ENCODE measurements at regions of chr10 and their contacts with region 1.

Region 1: DNA sequence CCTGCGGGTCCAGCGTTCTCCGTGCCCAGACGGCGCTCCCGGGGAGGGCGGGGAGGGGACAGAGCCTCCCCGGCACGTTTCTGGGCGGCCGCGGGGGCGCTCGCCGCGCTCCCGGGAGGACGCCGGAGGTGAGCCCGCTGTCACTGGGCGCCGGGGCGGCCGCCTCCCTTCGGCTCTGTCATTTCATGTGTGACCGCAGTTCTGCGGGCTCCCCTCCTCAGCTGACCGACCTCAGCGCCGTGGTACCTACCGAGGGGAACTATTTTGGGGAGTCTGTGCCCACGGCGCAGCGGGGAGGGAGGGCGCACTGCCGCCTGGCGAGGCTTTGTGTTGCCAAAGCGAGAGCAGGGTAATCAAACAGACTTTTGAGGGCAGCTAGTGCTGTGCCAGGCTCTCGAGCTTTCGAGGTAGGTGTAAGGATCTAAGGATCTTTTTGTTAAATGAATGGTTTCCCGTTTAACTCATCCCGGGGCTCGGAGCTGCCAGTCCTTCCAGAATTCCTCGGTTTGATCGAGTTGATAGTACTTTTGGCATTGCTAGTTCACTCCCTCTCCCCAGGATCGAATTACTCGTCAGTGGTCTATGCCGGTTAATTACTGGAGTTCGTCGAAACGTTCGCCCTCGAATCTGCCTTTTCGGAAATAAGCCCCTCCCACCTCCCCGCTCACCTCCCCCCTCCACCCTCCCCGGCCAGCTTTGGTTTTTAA is 1.9 kb downstream of the ARID5B start:
- H3K4me3 Mint-ChIP-seq: peak overlapping the region; percentile 97
- H3K27ac Mint-ChIP-seq: peak overlapping the region; percentile 97
- H3K4me1 Mint-ChIP-seq: peaks cover 29% of the 10 kb centered on the region
- H3K27me3 Mint-ChIP-seq: no peaks in the 10 kb centered on the region

Region 2: DNA sequence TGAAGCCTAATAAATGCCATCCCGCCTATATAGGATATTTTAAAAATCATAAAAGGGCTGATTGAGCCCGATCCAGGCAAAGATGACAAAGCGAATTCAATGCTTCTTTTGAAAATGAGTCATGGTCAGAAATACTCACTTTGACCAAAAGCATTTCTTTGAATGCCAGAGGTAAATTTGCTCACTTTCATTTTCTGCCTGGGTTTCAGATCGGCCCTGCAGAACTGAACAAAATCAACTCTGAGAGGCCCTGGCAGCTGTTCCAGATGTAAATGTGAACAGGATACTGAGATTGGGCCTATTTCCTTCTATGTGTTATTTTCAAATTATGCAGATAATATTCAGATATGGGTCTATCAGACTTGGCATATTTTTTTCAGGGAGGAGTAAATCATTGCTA is 116.6 kb before region 1 on chr10:
- intact Hi-C with region 1: no loop called
- H3K4me3 Mint-ChIP-seq: no peak overlapping the region
- H3K27ac Mint-ChIP-seq: no peak overlapping the region
- H3K4me1 Mint-ChIP-seq: peaks cover 6% of the 10 kb centered on the region
- H3K27me3 Mint-ChIP-seq: no peaks in the 10 kb centered on the region

Region 3: GRCh38 chr10:61941202-61941681 is 37.9 kb after region 1 on chr10:
- intact Hi-C with region 1: loop called (anchors 1 kb)
- H3K4me3 Mint-ChIP-seq: peak overlapping the region; percentile 64
- H3K27ac Mint-ChIP-seq: peak overlapping the region; percentile 94
- H3K4me1 Mint-ChIP-seq: peaks cover 59% of the 10 kb centered on the region
- H3K27me3 Mint-ChIP-seq: no peaks in the 10 kb centered on the region

Region 4: DNA sequence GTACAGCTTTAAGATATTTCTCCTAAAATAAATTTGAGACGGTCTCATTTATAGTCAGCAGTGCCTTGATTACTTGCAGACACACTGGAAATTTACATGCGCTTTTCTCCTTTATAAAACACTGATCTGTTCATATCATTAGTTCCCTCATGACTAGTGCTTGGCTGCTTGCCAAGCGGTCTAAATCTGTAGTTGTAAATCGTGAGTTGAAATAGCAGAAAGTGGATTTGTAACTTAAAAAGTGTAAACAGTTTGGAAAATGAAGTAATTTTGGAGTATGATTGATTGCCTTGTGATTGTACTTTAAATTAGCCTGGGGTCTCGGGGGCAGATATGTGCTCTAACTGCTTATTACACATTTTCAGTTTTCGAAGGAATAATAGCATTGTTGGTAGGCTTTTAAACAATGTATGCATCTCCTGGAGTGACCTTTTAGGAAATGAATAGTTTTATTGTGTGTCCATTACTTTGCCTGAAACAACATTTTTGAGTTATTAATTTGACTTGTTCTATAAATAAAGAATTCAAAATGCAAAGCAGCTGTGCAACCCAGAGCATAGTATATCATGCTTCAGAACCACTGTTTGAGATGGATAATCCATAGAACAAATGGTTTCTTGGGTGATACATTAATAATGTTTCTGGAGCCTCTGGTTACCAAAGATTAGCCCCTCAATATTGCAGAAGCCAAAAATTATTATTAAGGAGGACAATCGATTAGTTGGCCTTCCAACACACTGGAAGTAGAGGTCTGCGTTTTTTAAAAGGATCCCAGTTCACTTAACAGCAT is 71.4 kb after region 1 on chr10:
- intact Hi-C with region 1: loop called (anchors 5 kb)
- H3K4me3 Mint-ChIP-seq: no peak overlapping the region
- H3K27ac Mint-ChIP-seq: peak overlapping the region; percentile 22
- H3K4me1 Mint-ChIP-seq: peaks cover 42% of the 10 kb centered on the region
- H3K27me3 Mint-ChIP-seq: no peaks in the 10 kb centered on the region

Region 5: GRCh38 chr10:61992671-61993668 is 89.6 kb after region 1 on chr10:
- intact Hi-C with region 1: loop called (anchors 5 kb)
- H3K4me3 Mint-ChIP-seq: peak overlapping the region; percentile 67
- H3K27ac Mint-ChIP-seq: peak overlapping the region; percentile 93
- H3K4me1 Mint-ChIP-seq: peaks cover 30% of the 10 kb centered on the region
- H3K27me3 Mint-ChIP-seq: no peaks in the 10 kb centered on the region

Region 6: GRCh38 chr10:62038609-62039190 is 135.3 kb after region 1 on chr10:
- intact Hi-C with region 1: loop called (anchors 5 kb)
- H3K4me3 Mint-ChIP-seq: peak overlapping the region; percentile 44
- H3K27ac Mint-ChIP-seq: peak overlapping the region; percentile 64
- H3K4me1 Mint-ChIP-seq: peaks cover 45% of the 10 kb centered on the region
- H3K27me3 Mint-ChIP-seq: no peaks in the 10 kb centered on the region

Measured in dendritic cell treated with granulocyte-macrophage colony-stimulating factor and Interleukin-4, amounts not matched to agents 40 ng/mL and 50 ng/mL, for 4 days (primary cell).